Activated CD4-positive, alpha-beta memory T cell treated with anti-CD3 and anti-CD28 coated beads, Interleukin-2, amount 10 ng/mL, durations not matched to agents 7 days and 5 days (primary cell): ENCODE measurements at regions of chr1 and their contacts with region 1.

Region 1: GRCh38 chr1:110209715-110210603 is at the start of gene KCNC4:
- DNase-seq: peak; percentile 95
- H3K4me3 Mint-ChIP-seq: peak within 1 kb of the TSS; percentile 81
- H3K27ac Mint-ChIP-seq: peak within 1 kb of the TSS; percentile 88
- H3K4me1 Mint-ChIP-seq: peaks cover 46% of the 10 kb centered on the region
- H3K27me3 Mint-ChIP-seq: peaks cover 9% of the 10 kb centered on the region
- total RNA-seq, gene KCNC4: 6.8 to 8.1 TPM

Region 2: GRCh38 chr1:109732390-109732881 is 477.5 kb before region 1 on chr1:
- CTCF ChIA-PET with region 1: no interaction called
- POLR2A ChIA-PET with region 1: no interaction called
- DNase-seq: no peak
- H3K4me3 Mint-ChIP-seq: no peak overlapping the region
- H3K27ac Mint-ChIP-seq: no peak overlapping the region
- H3K4me1 Mint-ChIP-seq: no peaks in the 10 kb centered on the region
- H3K27me3 Mint-ChIP-seq: peaks cover 41% of the 10 kb centered on the region

Region 3: GRCh38 chr1:110148961-110149360 is 61.0 kb before region 1 on chr1:
- CTCF ChIA-PET with region 1: no interaction called
- POLR2A ChIA-PET with region 1: no interaction called
- DNase-seq: no peak
- H3K4me3 Mint-ChIP-seq: no peak overlapping the region
- H3K27ac Mint-ChIP-seq: no peak overlapping the region
- H3K4me1 Mint-ChIP-seq: peaks cover 2% of the 10 kb centered on the region
- H3K27me3 Mint-ChIP-seq: peaks cover 23% of the 10 kb centered on the region

Region 4: DNA sequence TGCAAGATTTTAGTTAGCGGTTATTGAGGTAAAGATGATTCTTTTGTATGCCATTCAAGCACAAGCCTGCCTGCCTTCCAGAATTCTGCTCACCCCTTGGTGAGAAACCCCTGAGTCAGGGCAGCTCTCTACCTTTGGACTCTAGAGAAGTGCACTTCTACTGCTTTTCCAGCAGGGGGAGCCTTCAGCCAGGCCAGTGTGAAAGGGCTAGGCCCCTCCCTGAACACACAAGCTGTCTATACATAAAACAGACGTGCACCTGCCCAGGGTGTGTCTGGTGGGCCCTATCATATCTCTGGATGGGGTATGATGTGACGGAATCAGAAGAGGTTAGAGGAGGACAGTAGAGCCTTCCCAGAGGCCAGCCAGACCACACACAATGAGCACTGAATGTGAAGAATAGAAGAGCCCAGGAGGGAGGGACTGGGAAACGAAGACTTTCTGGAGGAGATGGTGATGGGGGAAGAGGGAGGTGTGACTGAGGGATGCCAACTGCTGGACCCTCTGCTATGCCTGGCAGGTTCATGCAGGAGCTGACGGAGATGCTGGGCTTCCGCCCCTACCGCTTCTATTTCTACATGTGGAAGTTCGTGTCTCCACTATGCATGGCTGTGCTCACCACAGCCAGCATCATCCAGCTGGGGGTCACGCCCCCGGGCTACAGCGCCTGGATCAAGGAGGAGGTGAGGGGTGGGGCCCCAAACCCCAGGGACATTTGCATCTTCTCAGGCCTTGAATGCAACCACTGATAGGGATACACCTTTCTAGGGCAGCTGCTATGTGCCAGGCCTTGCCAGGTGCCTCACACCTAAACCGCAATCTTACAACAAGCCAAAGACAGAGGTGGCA is 12.8 kb before region 1 on chr1:
- CTCF ChIA-PET with region 1: interaction called, 28 read pairs
- POLR2A ChIA-PET with region 1: interaction called, 3 read pairs
- DNase-seq: peak; percentile 56
- H3K4me3 Mint-ChIP-seq: no peak overlapping the region
- H3K27ac Mint-ChIP-seq: no peak overlapping the region
- H3K4me1 Mint-ChIP-seq: no peaks in the 10 kb centered on the region
- H3K27me3 Mint-ChIP-seq: no peaks in the 10 kb centered on the region

Region 5: DNA sequence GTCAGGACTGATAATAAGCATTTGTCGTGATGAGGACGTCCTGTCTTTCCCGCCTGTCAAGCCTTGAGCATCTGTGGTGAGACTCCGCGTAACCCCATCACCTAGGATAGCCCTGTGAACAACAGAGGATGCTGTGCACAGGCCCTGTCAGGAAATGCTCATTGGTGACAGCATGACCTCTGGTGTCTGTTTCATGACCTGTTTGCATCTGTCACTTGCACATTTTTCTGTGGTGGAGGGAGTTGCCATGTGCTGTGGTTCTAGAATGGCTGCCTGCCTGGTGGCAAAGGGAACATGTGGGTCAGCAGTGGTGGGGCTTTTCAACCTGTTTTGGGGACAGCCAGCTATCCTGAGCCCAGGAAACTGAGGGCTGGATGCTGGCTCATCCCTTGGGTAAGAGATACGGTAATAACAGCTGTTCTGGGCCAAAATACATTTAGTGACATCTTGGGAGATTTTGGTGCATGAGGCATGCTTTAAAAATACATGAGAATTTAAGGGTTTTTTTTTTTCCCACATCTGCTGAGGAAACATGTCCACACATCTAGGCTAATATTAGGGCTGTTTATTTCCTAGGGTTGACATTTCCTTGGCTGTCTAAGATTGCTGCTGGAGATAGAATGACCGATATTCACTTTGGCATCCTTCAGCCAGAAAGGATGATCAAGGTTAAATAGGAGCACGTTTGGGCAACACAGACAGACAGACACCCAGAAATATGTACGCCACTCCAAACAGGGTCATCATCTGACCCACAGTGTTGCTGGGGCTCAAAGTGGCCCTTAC is 53.1 kb after region 1 on chr1:
- CTCF ChIA-PET with region 1: interaction called, 12 read pairs
- POLR2A ChIA-PET with region 1: no interaction called
- DNase-seq: peak; percentile 26
- H3K4me3 Mint-ChIP-seq: no peak overlapping the region
- H3K27ac Mint-ChIP-seq: no peak overlapping the region
- H3K4me1 Mint-ChIP-seq: no peaks in the 10 kb centered on the region
- H3K27me3 Mint-ChIP-seq: peaks cover 7% of the 10 kb centered on the region

Region 6: DNA sequence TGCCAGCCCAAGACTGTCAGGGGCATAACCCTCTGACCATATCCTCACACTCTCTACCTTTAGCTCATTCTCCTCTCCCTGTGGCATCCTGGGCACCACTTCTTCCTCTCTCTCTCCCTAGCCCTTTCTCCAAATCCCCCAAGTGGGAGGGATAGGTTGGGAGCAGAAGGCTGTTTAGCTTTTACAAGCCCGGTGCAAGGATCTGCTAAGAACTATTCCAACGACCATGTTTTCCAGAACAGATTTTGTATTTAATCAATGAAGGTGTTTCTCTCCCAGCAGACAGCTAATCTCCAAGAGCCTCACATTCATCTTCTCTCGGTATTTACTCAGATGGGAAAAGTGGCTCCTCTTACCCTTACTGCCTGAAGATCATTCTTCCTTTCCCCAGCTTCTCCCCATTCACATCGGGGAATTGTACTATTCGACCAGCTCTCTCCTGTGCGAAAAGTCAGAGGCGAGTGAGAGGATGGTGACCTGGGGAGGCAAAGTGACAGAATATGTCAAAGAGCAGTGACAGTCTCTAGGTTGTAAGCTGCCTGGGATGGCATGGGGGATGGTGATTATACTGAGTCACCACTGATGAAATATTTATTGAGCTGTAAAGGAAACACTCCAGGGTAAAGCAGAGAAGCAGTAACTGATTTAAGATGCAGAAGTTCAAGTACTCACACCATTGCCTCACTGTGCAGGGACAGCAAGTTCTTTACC is 82.2 kb after region 1 on chr1:
- CTCF ChIA-PET with region 1: interaction called, 10 read pairs
- POLR2A ChIA-PET with region 1: no interaction called
- DNase-seq: no peak
- H3K4me3 Mint-ChIP-seq: no peak overlapping the region
- H3K27ac Mint-ChIP-seq: no peak overlapping the region
- H3K4me1 Mint-ChIP-seq: no peaks in the 10 kb centered on the region
- H3K27me3 Mint-ChIP-seq: no peaks in the 10 kb centered on the region

Region 7: GRCh38 chr1:110312188-110313121 is 102.5 kb after region 1 on chr1:
- CTCF ChIA-PET with region 1: interaction called, 234 read pairs
- POLR2A ChIA-PET with region 1: interaction called, 3 read pairs
- DNase-seq: peak; percentile 68
- H3K4me3 Mint-ChIP-seq: no peak overlapping the region
- H3K27ac Mint-ChIP-seq: no peak overlapping the region
- H3K4me1 Mint-ChIP-seq: no peaks in the 10 kb centered on the region
- H3K27me3 Mint-ChIP-seq: no peaks in the 10 kb centered on the region

Region 8: DNA sequence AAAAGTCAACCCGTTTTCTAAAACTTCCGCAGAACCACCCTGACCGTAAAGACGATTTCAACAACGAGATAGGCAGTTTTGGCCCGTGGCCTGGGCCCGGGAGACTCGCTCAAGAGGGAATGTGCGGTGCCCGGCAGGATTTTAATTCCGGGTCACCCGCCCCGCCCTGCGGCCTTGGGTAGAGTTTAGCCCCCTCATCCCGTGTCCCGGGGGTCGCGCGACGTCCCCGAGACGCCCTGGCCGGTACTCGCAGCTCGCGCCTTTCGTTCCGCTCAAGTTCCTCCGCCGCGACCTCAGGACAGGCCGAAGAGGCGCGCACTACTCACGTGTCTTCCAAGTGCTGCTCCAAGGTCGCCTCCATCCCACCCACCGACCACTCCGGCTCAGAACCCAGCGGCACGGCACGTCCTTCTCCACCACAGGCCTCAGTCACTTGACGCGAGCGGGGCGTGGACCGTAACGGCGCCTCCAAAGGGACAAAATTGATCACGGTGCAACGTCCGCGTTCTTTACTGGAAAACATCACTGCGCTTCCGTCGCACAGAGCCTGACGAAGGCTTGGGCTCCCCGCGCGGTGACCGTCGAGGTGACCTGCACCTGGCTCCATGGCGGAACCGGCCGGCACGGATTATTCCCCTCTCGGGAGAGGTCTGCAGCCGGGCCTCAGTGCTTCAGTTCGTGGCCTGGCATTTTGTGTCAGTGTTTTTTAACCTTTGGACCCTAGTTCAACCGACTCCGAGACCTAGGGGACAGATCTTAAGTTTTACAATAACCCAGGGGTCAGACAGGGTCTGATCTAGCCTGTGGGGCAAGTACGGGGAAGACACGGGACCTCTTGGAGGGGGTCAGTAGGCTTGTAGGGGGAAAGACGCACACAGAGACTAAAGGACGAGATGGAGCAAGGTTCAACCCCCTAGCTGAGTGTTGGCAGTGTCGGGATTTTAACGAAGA is 197.6 kb after region 1 on chr1 and contains the start of gene LAMTOR5:
- CTCF ChIA-PET with region 1: interaction called, 39 read pairs
- POLR2A ChIA-PET with region 1: interaction called, 6 read pairs
- DNase-seq: peak; percentile 94
- H3K4me3 Mint-ChIP-seq: peak within 1 kb of the TSS; percentile 95
- H3K27ac Mint-ChIP-seq: peak within 1 kb of the TSS; percentile 96
- H3K4me1 Mint-ChIP-seq: peaks cover 27% of the 10 kb centered on the region
- H3K27me3 Mint-ChIP-seq: no peaks in the 10 kb centered on the region
- total RNA-seq, gene LAMTOR5: 127 to 128 TPM

Region 9: DNA sequence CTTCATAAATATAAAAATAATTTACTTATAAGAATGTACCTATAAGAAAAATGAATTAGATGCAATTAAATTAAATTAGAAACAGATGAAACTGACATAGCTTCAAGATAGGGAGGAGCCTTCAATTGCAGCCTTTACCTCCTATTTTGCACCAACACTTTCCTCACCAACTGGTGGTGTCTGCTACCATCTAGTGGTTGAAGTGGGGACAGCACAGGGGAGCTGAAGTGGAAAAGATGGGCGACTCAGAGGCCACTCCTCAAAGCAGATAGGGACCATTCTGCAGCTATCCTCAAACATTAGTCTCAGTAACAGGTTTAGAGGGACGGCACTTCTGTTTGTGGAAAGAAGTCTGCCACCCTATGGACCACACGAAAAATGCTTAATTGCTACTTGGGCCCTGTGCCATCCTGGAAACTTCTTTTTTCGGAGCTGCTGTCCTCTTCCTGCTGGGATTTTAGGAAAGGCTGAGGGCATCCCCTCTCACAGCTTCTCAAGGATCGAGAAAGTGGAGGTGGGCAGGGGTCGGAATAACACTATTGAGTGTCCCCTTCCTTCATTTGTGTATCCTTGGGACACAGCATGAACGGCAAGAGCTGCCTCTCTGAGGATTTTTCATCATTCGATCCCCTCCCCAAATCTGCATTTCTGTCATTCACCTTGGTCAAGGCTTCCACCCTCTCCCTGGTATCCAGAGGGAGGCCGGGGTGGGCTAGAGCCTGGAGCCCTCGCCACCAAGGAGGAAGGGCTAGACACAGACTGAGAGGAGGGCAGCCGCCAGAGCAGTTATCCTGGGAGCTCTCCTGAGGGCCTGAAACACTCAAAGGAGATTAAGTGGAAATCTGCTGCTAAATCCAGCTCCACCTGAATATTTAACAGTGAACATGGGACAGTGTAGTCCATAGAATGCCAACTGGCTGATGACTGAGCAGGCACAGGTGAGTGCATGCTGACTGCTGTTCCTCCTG is 250.6 kb after region 1 on chr1:
- CTCF ChIA-PET with region 1: interaction called, 74 read pairs
- POLR2A ChIA-PET with region 1: interaction called, 11 read pairs
- DNase-seq: peak; percentile 85
- H3K4me3 Mint-ChIP-seq: no peak overlapping the region
- H3K27ac Mint-ChIP-seq: no peak overlapping the region
- H3K4me1 Mint-ChIP-seq: no peaks in the 10 kb centered on the region
- H3K27me3 Mint-ChIP-seq: no peaks in the 10 kb centered on the region